Activated naive CD4-positive, alpha-beta T cell treated with anti-CD3 and anti-CD28 coated beads for 36 hours (primary cell): ENCODE measurements at regions of chr3 and their contacts with region 1.

Region 1: GRCh38 chr3:2375376-2375775 is 276.7 kb downstream of the CNTN4 start:
- DNase-seq: no peak
- H3K4me3 Mint-ChIP-seq: no peak overlapping the region
- H3K27ac Mint-ChIP-seq: no peak overlapping the region
- H3K4me1 Mint-ChIP-seq: no peaks in the 10 kb centered on the region
- H3K27me3 Mint-ChIP-seq: no peaks in the 10 kb centered on the region

Region 2: DNA sequence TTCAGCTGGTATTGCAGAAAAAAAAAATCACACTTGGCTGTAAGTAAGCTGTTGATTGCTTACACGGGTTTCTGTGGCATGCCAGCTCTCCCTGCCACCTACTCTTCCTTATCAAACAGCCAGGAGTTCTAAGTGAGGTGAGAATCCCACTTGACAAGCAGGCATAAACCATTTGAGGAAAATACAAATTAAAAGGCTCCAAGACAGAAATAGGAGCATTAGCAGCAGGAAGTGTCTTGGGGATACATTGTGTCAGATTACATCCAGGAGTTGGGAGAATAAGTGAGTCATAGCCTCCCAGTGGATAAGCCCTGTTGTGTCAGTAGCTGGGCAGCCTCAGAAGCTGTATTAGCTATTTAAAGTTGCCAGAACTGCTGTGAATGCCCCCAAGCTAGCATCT is 20.7 kb before region 1 on chr3:
- CTCF ChIA-PET with region 1: no interaction called
- intact Hi-C with region 1: loop called (anchors 1 kb)
- DNase-seq: no peak
- H3K4me3 Mint-ChIP-seq: no peak overlapping the region
- H3K27ac Mint-ChIP-seq: no peak overlapping the region
- H3K4me1 Mint-ChIP-seq: no peaks in the 10 kb centered on the region
- H3K27me3 Mint-ChIP-seq: peaks cover under 1% of the 10 kb centered on the region

Region 3: GRCh38 chr3:2697589-2697988 is 322.2 kb after region 1 on chr3:
- CTCF ChIA-PET with region 1: no interaction called
- intact Hi-C with region 1: no loop called
- DNase-seq: no peak
- H3K4me3 Mint-ChIP-seq: no peak overlapping the region
- H3K27ac Mint-ChIP-seq: no peak overlapping the region
- H3K4me1 Mint-ChIP-seq: no peaks in the 10 kb centered on the region
- H3K27me3 Mint-ChIP-seq: no peaks in the 10 kb centered on the region